ENCODE measurements at regions of chr12 and their contacts with region 1.

Region 1: DNA sequence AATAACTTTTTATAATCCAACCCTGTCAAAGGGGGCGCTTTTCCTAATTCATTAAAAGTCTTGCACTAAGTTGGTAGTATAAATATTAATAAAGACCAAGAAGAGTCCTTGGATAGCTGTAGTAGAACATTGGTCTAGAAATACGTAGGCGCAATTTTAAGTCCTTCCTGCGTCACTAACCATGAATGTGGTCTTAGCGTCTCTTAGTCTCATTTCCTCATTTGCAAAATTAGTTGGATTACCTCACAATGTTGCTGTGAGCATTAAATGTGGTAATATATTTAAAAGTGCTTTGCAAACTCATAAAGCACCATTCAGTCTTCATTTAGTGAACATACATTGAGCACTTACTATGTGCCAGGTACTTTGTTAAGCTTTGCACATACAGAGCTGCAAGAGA is 149.7 kb downstream of the AEBP2 start:
- DNase-seq: no peak
- ATAC-seq: no peak
- H3K4me3 ChIP-seq: no peak overlapping the region
- H3K27ac ChIP-seq: no peak overlapping the region
- H3K4me1 ChIP-seq: no peaks in the 10 kb centered on the region
- H3K27me3 ChIP-seq: no peaks in the 10 kb centered on the region
- CTCF ChIP-seq: no peak

Region 2: GRCh38 chr12:18955594-18955993 is 633.4 kb before region 1 on chr12:
- intact Hi-C with region 1: no loop called
- DNase-seq: no peak
- ATAC-seq: peak in 1 of 8 donors; percentile 31
- H3K4me3 ChIP-seq: no peak overlapping the region
- H3K27ac ChIP-seq: no peak overlapping the region
- H3K4me1 ChIP-seq: peaks cover 0 to 18% (median 0%) of the 10 kb centered on the region in 9 donors
- H3K27me3 ChIP-seq: no peaks in the 10 kb centered on the region
- CTCF ChIP-seq: no peak

Region 3: GRCh38 chr12:19608039-19608438 is 19.1 kb after region 1 on chr12:
- intact Hi-C with region 1: loop called in 1 of 10 experiments (anchors 1 kb)
- DNase-seq: no peak
- ATAC-seq: no peak
- H3K4me3 ChIP-seq: no peak overlapping the region
- H3K27ac ChIP-seq: no peak overlapping the region
- H3K4me1 ChIP-seq: no peaks in the 10 kb centered on the region
- H3K27me3 ChIP-seq: no peaks in the 10 kb centered on the region
- CTCF ChIP-seq: no peak

Region 4: GRCh38 chr12:20350495-20350894 is 761.5 kb after region 1 on chr12:
- intact Hi-C with region 1: no loop called
- DNase-seq: no peak
- ATAC-seq: peak in 4 of 8 donors; percentile 37 to 68 (median 48)
- H3K4me3 ChIP-seq: no peak overlapping the region
- H3K27ac ChIP-seq: peak overlapping the region in 7 of 10 donors; percentile 3 to 57 (median 48)
- H3K4me1 ChIP-seq: peaks cover 0 to 27% (median 0%) of the 10 kb centered on the region in 9 donors
- H3K27me3 ChIP-seq: no peaks in the 10 kb centered on the region
- CTCF ChIP-seq: no peak

Measured in heart right ventricle (tissue), 16 donors.